Right ventricle myocardium superior (tissue), 1 donor: ENCODE measurements at regions of chr11 and their contacts with region 1.

Region 1: DNA sequence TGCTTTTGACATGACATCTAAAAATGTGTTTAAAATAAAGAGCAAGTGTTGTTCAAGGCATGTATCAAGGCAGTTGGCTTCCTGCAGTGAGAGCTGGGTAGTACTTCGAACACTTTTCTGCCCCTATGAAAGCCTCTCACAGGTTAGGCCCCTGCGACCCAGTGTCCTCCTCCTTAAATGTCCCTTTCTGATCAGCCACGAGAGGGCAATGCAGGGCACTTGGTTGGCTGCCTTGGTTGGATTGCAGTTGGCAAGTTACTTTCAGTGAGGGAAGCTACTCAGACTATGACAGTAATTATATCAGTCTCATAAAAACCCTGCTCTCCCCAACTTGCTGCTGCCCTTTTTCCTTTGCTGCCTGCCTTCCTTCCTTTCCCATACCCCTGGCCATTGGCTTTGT is 743.8 kb downstream of the NTM start:
- DNase-seq: peak; percentile 52
- ATAC-seq: peak; percentile 48

Region 2: GRCh38 chr11:132402071-132402684 is 288.0 kb after region 1 on chr11:
- intact Hi-C with region 1: loop called (anchors 5 kb)
- DNase-seq: no peak
- ATAC-seq: peak; percentile 75